ENCODE measurements at regions of chr12 and their contacts with region 1.

Region 1: DNA sequence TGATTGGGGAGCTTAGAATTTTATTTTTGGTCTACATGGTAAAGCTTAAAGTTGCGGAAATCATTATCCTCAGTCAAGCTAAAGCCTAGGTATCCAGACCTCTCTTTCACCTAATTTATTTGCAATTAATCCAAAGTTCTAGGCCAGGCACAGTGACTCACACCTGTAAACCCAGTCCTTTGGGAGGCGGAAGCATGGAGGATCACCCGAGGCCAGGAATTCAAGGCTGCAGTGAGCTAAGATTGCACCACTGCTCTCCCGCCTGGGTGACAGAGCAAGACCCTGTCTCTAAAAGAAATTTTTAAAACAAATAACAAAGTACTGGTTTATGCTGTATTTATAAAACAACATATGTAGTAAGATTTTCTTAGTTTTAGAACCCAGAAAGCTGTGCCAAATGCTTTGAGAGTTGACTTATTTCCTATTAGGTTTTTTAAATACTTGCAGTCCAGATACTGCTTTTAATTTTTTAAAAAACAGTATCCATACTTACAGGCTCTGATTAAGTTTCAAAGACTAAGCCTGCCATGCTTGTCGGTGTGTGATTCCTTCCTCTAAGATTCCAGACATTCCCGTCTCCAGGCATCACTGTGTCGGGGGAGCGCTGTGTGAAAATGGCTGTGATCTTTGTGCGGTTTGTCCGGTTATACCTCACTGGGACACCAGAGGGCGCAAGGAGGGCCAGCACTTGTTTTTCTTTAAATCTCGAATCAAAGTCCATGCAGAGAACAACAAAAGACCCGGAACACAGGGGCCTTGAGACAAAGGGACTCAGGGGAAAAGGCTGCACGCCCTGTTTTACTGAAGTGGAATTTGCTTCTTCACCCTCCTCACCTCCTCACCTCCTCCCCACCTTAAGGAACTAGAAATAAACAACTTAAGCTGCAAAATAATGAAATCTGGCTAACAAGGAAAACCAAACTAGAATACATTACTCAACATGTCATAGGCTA is 24.6 kb upstream of the TMPO start:
- DNase-seq: no peak
- H3K4me3 ChIP-seq: no peak overlapping the region
- CTCF ChIP-seq: peak; percentile 86

Region 2: DNA sequence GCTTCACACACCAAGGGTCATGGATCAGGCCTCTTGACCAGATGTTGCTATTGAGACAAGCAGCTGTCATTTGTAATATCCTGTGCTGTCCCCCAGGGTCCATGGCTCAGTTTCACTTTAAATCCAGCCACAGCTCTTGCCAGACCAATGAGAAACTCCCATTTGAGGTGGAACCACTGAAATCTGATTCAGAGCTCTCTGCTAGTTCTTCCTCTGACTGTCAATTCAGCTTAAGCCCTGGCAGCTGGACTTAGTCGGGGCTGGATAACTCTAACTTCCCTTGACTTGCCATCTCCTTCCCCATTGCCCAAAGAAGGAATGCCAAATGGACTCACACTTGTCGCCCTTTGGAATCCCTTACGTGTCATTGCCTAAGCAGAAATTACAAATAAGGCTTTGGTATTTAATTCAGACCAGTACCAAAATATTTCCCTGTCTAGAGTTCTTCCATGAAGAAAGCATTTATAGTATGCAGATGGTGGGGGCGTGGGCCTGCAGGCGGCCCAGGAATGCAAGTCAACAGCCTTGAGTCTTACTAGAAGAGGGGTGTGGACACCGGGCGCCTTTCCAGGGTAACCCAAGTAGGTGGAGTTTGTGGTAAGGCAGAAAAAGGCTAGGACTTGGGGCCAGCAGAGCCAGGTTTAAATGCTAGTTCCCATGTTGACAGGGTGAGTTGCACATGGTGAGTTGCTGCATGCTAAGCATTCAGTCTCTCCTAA is 72.3 kb before region 1 on chr12:
- CTCF ChIA-PET with region 1: interaction called, 16 read pairs
- POLR2A ChIA-PET with region 1: no interaction called
- DNase-seq: peak; percentile 99
- H3K4me3 ChIP-seq: peak overlapping the region; percentile 45
- CTCF ChIP-seq: no peak

Region 3: GRCh38 chr12:98503592-98504367 is 13.0 kb after region 1 on chr12:
- CTCF ChIA-PET with region 1: interaction called, 51 read pairs
- POLR2A ChIA-PET with region 1: interaction called, 3 read pairs
- DNase-seq: peak; percentile 52
- H3K4me3 ChIP-seq: peak overlapping the region; percentile 80
- CTCF ChIP-seq: no peak

Region 4: GRCh38 chr12:98516184-98516873 is 25.6 kb after region 1 on chr12:
- CTCF ChIA-PET with region 1: interaction called, 67 read pairs
- POLR2A ChIA-PET with region 1: no interaction called
- DNase-seq: peak; percentile 16
- H3K4me3 ChIP-seq: peak overlapping the region; percentile 95
- CTCF ChIP-seq: peak; percentile 51

Region 5: DNA sequence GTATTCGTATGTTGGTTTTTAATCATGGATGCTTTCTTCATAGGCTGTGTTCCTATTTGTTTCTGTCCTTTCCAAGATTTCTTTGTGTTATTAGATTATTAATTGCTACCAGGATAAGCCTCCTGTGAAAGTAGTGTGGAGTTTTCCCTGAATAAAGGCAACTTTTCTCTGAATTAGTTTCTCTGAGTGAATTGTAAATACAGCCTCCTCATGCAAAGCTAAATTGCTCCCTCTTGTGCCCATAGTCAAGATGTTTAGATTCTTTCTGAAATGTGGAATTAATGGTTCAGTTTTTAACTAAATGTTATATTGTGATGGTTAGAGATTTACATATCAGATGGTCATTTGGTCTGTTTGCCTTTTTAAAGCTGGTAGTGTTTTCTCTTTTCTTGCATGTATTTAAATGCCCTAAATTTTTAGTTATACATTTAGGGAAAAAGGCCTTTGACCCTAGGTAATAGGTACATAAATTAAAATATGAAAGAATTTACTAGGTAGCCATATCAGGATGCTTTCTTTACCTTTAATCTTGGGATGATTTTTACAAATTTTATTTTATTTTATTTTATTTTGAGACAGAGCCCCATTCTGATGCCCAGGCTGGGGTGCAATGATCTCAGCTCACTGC is 163.2 kb after region 1 on chr12:
- CTCF ChIA-PET with region 1: interaction called, 16 read pairs
- POLR2A ChIA-PET with region 1: no interaction called
- DNase-seq: no peak
- H3K4me3 ChIP-seq: no peak overlapping the region
- CTCF ChIP-seq: peak; percentile 42